Dendritic cell treated with granulocyte-macrophage colony-stimulating factor and Interleukin-4, amounts not matched to agents 40 ng/mL and 50 ng/mL, for 4 days (primary cell): ENCODE measurements at regions of chr3 and their contacts with region 1.

Region 1: DNA sequence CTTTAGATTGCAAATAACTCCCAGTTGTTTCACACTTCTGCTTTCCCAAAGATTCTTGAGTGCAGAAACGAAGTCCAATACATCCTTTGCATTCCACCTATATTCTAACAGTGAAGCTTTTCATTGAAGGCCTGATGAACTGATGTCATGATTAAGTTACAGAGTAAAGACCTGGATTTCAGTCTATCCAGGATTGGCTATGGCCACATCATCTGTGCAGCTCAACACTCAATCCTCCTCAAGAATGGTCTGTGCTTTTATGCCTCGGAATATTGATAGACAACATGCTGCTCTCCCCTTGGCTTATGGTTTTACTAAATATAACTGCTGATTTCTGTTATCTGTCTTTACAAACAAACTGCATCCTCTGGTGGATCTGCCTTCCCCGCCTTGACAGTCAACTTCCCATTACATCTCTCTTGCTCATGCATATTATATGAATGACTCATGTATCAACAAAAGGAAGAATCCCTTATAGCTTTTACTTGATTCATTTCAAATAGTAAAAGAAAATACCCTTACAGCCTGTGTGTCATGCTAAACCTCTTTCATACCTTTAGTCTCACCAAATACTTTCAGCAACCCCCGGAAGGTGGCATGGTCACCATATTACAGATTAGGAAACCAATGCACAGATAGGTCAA is 59.5 kb downstream of the SCN11A start:
- H3K4me3 Mint-ChIP-seq: no peak overlapping the region
- H3K27ac Mint-ChIP-seq: no peak overlapping the region
- H3K4me1 Mint-ChIP-seq: no peaks in the 10 kb centered on the region
- H3K27me3 Mint-ChIP-seq: peaks cover 3% of the 10 kb centered on the region

Region 2: DNA sequence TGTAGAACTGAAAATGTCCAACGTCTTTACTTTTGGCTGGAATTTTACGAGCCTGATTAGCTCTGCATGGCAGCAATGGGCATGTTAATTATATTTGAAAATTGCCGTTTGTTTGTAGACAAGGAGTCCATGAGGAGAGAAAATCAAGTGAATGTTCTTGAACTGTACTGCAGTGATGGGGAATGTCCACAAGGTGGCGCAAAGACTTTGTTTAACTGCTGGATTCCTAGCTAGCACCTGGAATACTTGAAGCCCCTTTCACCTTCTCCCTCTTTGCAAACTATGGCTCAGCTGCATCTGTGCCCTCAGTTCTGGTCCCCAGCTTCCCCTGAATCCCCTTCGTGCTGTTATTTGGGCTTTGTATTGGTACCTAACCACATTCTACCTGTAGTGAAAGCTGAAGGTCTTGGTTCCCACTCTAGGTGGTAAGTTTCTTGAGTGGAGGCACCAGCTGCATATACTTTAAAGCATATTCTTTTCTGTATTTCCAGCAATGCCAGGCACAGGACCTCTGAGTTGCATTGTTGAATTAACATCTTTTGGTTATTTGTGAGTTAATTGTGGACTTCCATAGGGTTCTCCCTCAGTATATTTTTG is 470.8 kb before region 1 on chr3:
- intact Hi-C with region 1: no loop called
- H3K4me3 Mint-ChIP-seq: no peak overlapping the region
- H3K27ac Mint-ChIP-seq: no peak overlapping the region
- H3K4me1 Mint-ChIP-seq: no peaks in the 10 kb centered on the region
- H3K27me3 Mint-ChIP-seq: no peaks in the 10 kb centered on the region

Region 3: GRCh38 chr3:38738630-38739395 is 253.4 kb before region 1 on chr3:
- intact Hi-C with region 1: loop called (anchors 10 kb)
- H3K4me3 Mint-ChIP-seq: no peak overlapping the region
- H3K27ac Mint-ChIP-seq: no peak overlapping the region
- H3K4me1 Mint-ChIP-seq: peaks cover 9% of the 10 kb centered on the region
- H3K27me3 Mint-ChIP-seq: no peaks in the 10 kb centered on the region

Region 4: GRCh38 chr3:38890426-38890825 is 101.8 kb before region 1 on chr3:
- intact Hi-C with region 1: no loop called
- H3K4me3 Mint-ChIP-seq: no peak overlapping the region
- H3K27ac Mint-ChIP-seq: no peak overlapping the region
- H3K4me1 Mint-ChIP-seq: no peaks in the 10 kb centered on the region
- H3K27me3 Mint-ChIP-seq: peaks cover 2% of the 10 kb centered on the region

Region 5: GRCh38 chr3:38950581-38950980 is 41.7 kb before region 1 on chr3:
- intact Hi-C with region 1: no loop called
- H3K4me3 Mint-ChIP-seq: no peak overlapping the region
- H3K27ac Mint-ChIP-seq: peak overlapping the region; percentile 81
- H3K4me1 Mint-ChIP-seq: peaks cover 9% of the 10 kb centered on the region
- H3K27me3 Mint-ChIP-seq: no peaks in the 10 kb centered on the region

Region 6: GRCh38 chr3:39302178-39302577 is 309.9 kb after region 1 on chr3:
- intact Hi-C with region 1: no loop called
- H3K4me3 Mint-ChIP-seq: no peak overlapping the region
- H3K27ac Mint-ChIP-seq: no peak overlapping the region
- H3K4me1 Mint-ChIP-seq: no peaks in the 10 kb centered on the region
- H3K27me3 Mint-ChIP-seq: peaks cover 6% of the 10 kb centered on the region